ENCODE measurements at regions of chr11 and their contacts with region 1.

Region 1: DNA sequence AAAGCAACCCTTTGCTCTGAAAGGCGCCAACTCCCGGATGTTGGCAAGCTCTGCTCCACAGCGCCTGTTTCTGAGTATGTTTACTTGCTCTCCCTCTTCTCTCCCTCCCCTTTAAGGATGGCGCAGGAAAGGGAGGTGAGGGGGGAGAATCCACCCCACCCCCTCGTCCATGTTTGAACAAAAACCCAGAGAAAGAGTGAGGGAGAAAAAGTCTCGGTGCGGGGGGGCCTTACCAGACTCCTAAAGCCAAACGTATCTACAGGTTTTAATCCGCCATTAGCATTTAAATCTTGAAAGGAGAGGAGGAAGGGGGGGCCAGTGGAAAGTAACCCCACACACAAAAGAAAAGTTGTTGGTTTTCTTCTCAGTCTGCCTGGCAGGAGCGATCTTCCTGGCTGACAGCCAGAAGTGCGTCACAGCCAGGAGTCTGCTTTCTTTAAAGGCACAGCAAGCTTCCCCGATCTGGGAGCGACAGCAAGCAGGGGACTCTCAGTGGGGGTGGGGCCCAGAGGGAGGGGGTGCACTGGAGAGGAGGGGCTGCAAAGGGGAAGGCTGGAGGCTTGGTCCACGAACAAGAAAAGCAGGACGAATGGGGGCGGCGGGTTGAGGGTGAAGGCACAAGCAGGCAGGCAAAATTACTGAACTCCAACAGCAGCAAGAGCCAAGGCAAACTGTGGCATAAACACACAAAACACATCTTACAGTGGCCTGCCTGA is 39.5 kb downstream of the NUMA1 start:
- DNase-seq: peak; percentile 73
- ATAC-seq: peak; percentile 50
- H3K4me3 ChIP-seq: peak overlapping the region; percentile 72 to 86 (median 83)
- H3K4me3 Mint-ChIP-seq: no peak overlapping the region
- H3K27ac ChIP-seq: peak overlapping the region; percentile 72 to 92
- H3K27ac Mint-ChIP-seq: no peak overlapping the region
- H3K4me1 ChIP-seq: peaks cover 45 to 54% of the 10 kb centered on the region in 2 donors
- H3K4me1 Mint-ChIP-seq: peaks cover 30% of the 10 kb centered on the region
- H3K27me3 ChIP-seq: no peaks in the 10 kb centered on the region
- H3K27me3 Mint-ChIP-seq: no peaks in the 10 kb centered on the region
- CTCF ChIP-seq: no peak

Region 2: DNA sequence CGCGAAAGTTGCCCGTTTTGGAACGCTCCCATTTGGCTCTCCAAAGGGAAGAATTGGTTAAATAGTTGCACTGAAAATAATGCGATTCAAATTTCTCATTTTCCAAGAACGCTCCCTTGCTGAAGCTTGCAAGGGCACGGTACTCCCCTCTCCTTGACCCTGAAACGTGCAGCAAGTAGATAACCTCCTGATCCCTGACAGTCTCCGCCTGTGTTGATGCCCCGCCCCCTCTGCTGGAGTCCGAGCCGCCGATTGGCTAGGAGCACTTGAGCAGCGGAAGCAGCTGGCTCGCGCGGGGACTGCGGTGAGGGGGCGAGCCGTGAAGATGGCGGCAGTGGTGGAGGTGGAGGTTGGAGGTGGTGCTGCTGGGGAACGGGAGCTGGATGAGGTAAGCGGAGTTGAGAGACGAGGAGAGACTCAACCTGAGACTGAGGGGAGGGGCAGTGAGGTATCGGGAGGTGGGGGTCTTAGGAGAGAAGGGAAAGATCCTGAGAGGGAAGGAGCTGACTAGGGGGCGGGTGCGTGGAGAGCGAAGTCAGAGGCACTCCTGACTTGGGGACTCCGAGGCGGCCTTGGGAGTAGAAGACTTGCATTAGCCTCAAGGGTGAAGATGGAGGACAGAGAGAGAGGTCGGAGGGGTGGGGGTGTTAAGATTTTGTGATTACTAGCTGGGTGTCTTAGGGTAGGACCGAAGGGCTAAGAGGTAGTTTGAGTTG is 112.0 kb before region 1 on chr11 and contains the start of gene RNF121:
- CTCF ChIA-PET with region 1: interaction called, 5 read pairs
- POLR2A ChIA-PET with region 1: interaction called, 5 read pairs
- intact Hi-C with region 1: loop called (anchors 1 kb)
- DNase-seq: peak; percentile 97
- ATAC-seq: peak; percentile 91
- H3K4me3 ChIP-seq: peak within 1 kb of the TSS; percentile 89 to 100 (median 99)
- H3K4me3 Mint-ChIP-seq: peak within 1 kb of the TSS; percentile 96
- H3K27ac ChIP-seq: peak within 1 kb of the TSS; percentile 92 to 93
- H3K27ac Mint-ChIP-seq: peak within 1 kb of the TSS; percentile 98
- H3K4me1 ChIP-seq: peaks cover 35 to 46% of the 10 kb centered on the region in 2 donors
- H3K4me1 Mint-ChIP-seq: peaks cover 59% of the 10 kb centered on the region
- H3K27me3 ChIP-seq: no peaks in the 10 kb centered on the region
- H3K27me3 Mint-ChIP-seq: no peaks in the 10 kb centered on the region
- CTCF ChIP-seq: no peak
- total RNA-seq, gene RNF121: 54.5 and 56.0 TPM in 2 replicates

Region 3: DNA sequence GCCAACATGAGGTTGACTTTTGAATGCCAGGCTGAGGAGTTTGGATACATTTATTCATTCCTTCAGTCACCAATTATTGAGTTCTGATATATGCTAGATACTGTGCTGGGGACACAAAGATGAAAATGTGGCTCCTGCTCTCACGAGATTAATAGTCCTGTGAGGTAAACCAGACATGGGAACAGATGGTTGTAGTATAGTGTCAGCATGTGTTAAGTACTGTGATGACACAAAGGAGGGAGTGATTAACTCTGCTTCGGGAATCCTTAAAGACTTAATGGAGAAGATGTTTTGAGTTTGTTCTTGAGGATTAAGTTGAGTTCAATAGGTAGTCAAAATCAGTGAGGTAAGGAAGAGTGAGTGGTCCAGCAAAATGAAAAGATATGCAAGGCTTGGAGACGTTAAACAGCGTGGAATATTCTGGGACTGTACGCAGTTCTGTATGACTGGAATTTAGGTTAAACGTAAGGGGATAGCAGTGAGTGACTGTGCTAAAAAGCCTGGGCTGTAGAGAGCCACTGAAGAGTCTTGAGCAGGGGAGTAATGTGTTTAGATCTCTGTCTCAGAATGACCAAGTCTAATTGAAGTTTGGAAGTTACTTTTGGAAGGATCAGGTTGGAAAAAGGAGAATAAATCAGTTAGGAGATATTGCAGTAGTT is 100.2 kb before region 1 on chr11:
- CTCF ChIA-PET with region 1: no interaction called
- POLR2A ChIA-PET with region 1: no interaction called
- intact Hi-C with region 1: no loop called
- DNase-seq: no peak
- ATAC-seq: no peak
- H3K4me3 ChIP-seq: no peak overlapping the region
- H3K4me3 Mint-ChIP-seq: no peak overlapping the region
- H3K27ac ChIP-seq: no peak overlapping the region
- H3K27ac Mint-ChIP-seq: no peak overlapping the region
- H3K4me1 ChIP-seq: peaks cover 12 to 13% of the 10 kb centered on the region in 2 donors
- H3K4me1 Mint-ChIP-seq: peaks cover 20% of the 10 kb centered on the region
- H3K27me3 ChIP-seq: no peaks in the 10 kb centered on the region
- H3K27me3 Mint-ChIP-seq: no peaks in the 10 kb centered on the region
- CTCF ChIP-seq: no peak

Region 4: DNA sequence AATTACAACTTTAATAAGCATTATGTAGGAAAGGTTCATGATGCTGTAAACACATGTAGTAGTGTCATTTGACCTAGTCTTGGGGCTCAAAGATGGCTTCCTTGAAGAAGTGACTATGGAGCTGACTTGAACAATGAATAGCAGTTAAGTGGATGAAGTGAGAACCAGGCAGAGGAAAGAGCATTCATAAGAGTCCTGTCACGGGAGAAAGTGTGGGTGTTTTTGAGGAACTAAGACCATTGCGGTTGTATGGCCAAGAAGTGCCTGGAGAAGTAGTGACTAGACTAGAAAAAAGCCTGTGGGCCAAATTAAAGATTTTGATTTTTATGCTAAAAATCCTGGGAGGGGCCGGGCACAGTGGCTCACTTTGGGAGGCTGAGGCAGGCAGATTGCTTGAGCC is 49.4 kb before region 1 on chr11:
- CTCF ChIA-PET with region 1: no interaction called
- POLR2A ChIA-PET with region 1: no interaction called
- intact Hi-C with region 1: loop called (anchors 5 kb)
- DNase-seq: peak; percentile 84
- ATAC-seq: peak; percentile 76
- H3K4me3 ChIP-seq: no peak overlapping the region
- H3K4me3 Mint-ChIP-seq: peak overlapping the region; percentile 7
- H3K27ac ChIP-seq: peak overlapping the region in 1 of 2 donors; percentile 22
- H3K27ac Mint-ChIP-seq: peak overlapping the region; percentile 34
- H3K4me1 ChIP-seq: peaks cover 39 to 59% of the 10 kb centered on the region in 2 donors
- H3K4me1 Mint-ChIP-seq: peaks cover 49% of the 10 kb centered on the region
- H3K27me3 ChIP-seq: no peaks in the 10 kb centered on the region
- H3K27me3 Mint-ChIP-seq: no peaks in the 10 kb centered on the region
- CTCF ChIP-seq: no peak

Region 5: DNA sequence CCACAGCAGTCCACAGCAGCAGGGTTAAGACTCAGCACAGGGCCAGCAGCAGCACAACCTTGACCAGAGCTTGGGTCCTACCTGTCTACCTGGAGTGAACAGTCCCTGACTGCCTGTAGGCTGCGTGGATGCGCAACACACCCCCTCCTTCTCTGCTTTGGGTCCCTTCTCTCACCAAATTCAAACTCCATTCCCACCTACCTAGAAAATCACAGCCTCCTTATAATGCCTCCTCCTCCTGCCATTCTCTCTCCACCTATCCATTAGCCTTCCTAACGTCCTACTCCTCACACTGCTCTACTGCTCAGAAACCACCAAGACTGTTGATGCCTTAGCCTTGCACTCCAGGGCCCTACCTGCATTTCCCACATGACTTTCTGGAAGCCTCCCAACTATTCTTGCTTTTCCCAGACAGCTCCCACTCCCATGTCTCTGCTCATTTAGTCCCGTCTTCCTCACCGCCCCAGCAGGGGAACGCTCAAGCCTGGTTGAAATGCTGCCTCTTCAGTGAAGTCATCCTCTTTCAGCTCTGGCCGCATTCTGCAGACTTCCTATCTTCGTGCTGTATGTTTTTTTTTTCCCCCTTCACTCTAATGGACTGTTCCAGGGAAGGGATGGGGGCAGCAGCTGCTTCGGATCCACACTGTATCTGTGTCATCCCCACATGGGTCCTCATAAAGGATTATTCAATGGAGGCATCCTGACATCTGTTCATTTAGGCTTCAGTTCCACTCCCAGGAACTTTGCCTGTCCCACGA is 38.9 kb before region 1 on chr11:
- CTCF ChIA-PET with region 1: no interaction called
- POLR2A ChIA-PET with region 1: no interaction called
- intact Hi-C with region 1: no loop called
- DNase-seq: no peak
- ATAC-seq: no peak
- H3K4me3 ChIP-seq: no peak overlapping the region
- H3K4me3 Mint-ChIP-seq: no peak overlapping the region
- H3K27ac ChIP-seq: peak overlapping the region in 1 of 2 donors; percentile 4
- H3K27ac Mint-ChIP-seq: peak overlapping the region; percentile 74
- H3K4me1 ChIP-seq: peaks cover 18 to 29% of the 10 kb centered on the region in 2 donors
- H3K4me1 Mint-ChIP-seq: peaks cover 33% of the 10 kb centered on the region
- H3K27me3 ChIP-seq: no peaks in the 10 kb centered on the region
- H3K27me3 Mint-ChIP-seq: no peaks in the 10 kb centered on the region
- CTCF ChIP-seq: no peak

Region 6: GRCh38 chr11:72080256-72080974 is 39.5 kb after region 1 on chr11 and contains the starts of genes LRRC51 and NUMA1:
- CTCF ChIA-PET with region 1: interaction called, 3 read pairs
- POLR2A ChIA-PET with region 1: interaction called, 6 read pairs
- intact Hi-C with region 1: loop called (anchors 1 kb)
- DNase-seq: peak; percentile 100
- ATAC-seq: peak; percentile 90
- H3K4me3 ChIP-seq: peak within 1 kb of the TSS; percentile 61 to 84 (median 77)
- H3K4me3 Mint-ChIP-seq: peak within 1 kb of the TSS; percentile 87
- H3K27ac ChIP-seq: peak within 1 kb of the TSS; percentile 78 to 90
- H3K27ac Mint-ChIP-seq: peak within 1 kb of the TSS; percentile 87
- H3K4me1 ChIP-seq: peaks cover 15 to 23% of the 10 kb centered on the region in 2 donors
- H3K4me1 Mint-ChIP-seq: peaks cover 41% of the 10 kb centered on the region
- H3K27me3 ChIP-seq: no peaks in the 10 kb centered on the region
- H3K27me3 Mint-ChIP-seq: no peaks in the 10 kb centered on the region
- CTCF ChIP-seq: no peak
- total RNA-seq, gene LRRC51: 5.5 and 7.7 TPM in 2 replicates
- total RNA-seq, gene NUMA1: 297 and 300 TPM in 2 replicates

Region 7: GRCh38 chr11:72141066-72141465 is 100.2 kb after region 1 on chr11:
- CTCF ChIA-PET with region 1: interaction called, 12 read pairs
- POLR2A ChIA-PET with region 1: no interaction called
- intact Hi-C with region 1: no loop called
- DNase-seq: no peak
- ATAC-seq: no peak
- H3K4me3 ChIP-seq: no peak overlapping the region
- H3K4me3 Mint-ChIP-seq: no peak overlapping the region
- H3K27ac ChIP-seq: no peak overlapping the region
- H3K27ac Mint-ChIP-seq: no peak overlapping the region
- H3K4me1 ChIP-seq: no peaks in the 10 kb centered on the region
- H3K4me1 Mint-ChIP-seq: no peaks in the 10 kb centered on the region
- H3K27me3 ChIP-seq: peaks cover 0 to 3% (median 0%) of the 10 kb centered on the region in 4 experiments
- H3K27me3 Mint-ChIP-seq: peaks cover 19% of the 10 kb centered on the region
- CTCF ChIP-seq: no peak

Region 8: DNA sequence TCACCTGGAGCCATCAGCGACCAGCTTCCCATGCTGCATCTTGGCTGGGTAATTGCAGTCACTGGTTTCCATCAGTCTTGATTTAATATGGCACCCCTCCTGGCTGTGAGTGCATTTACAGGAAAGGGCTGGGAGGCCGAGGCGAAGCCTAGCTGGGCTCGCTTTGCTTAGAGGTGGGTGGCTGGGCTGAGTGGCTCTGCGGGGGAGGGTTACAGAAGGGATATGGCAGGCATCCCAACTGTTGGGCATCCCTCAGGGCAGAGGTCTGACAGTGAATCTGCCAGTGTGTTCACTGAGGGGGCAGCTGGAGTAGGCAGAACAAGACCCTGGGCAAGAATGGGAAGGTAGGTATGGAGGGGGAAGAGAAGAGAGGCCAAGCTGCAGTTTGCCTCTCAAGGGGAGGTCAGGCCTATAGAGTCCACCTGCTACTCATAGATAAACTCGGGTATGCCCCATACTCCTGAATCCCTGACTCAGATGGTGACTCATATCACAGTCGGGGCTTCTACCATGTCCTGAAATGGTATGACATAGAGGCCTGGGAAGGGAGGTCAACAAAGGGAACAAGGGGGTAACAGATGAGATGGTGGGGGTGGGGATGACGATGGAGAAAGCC is 280.6 kb after region 1 on chr11:
- CTCF ChIA-PET with region 1: no interaction called
- POLR2A ChIA-PET with region 1: no interaction called
- intact Hi-C with region 1: no loop called
- DNase-seq: no peak
- ATAC-seq: no peak
- H3K4me3 ChIP-seq: no peak overlapping the region
- H3K4me3 Mint-ChIP-seq: no peak overlapping the region
- H3K27ac ChIP-seq: no peak overlapping the region
- H3K27ac Mint-ChIP-seq: no peak overlapping the region
- H3K4me1 ChIP-seq: no peaks in the 10 kb centered on the region
- H3K4me1 Mint-ChIP-seq: no peaks in the 10 kb centered on the region
- H3K27me3 ChIP-seq: no peaks in the 10 kb centered on the region
- H3K27me3 Mint-ChIP-seq: no peaks in the 10 kb centered on the region
- CTCF ChIP-seq: no peak

Measured in B cell (primary cell).